Mammary epithelial cell (primary cell): ENCODE measurements at regions of chr17 and their contacts with region 1.

Region 1: GRCh38 chr17:7997186-7997585 is 5.2 kb upstream of the GUCY2D start:
- DNase-seq: peak; percentile 52
- H3K4me3 ChIP-seq: no peak overlapping the region
- H3K27ac ChIP-seq: no peak overlapping the region
- H3K4me1 ChIP-seq: peaks cover 13% of the 10 kb centered on the region
- H3K27me3 ChIP-seq: no peaks in the 10 kb centered on the region
- CTCF ChIP-seq: peak; percentile 39 to 67

Region 2: GRCh38 chr17:7825206-7825990 is 171.8 kb before region 1 on chr17:
- CTCF ChIA-PET with region 1: no interaction called
- dilution Hi-C with region 1: no loop called
- in situ Hi-C with region 1: no loop called
- intact Hi-C with region 1: no loop called
- DNase-seq: no peak
- H3K4me3 ChIP-seq: no peak overlapping the region
- H3K27ac ChIP-seq: no peak overlapping the region
- H3K4me1 ChIP-seq: peaks cover 1% of the 10 kb centered on the region
- H3K27me3 ChIP-seq: no peaks in the 10 kb centered on the region
- CTCF ChIP-seq: peak in 1 of 2 donors; percentile 19

Region 3: GRCh38 chr17:7972131-7972785 is 24.9 kb before region 1 on chr17:
- CTCF ChIA-PET with region 1: no interaction called
- dilution Hi-C with region 1: no loop called
- in situ Hi-C with region 1: no loop called
- intact Hi-C with region 1: no loop called
- DNase-seq: no peak
- H3K4me3 ChIP-seq: no peak overlapping the region
- H3K27ac ChIP-seq: no peak overlapping the region
- H3K4me1 ChIP-seq: no peaks in the 10 kb centered on the region
- H3K27me3 ChIP-seq: no peaks in the 10 kb centered on the region
- CTCF ChIP-seq: peak; percentile 7 to 46

Region 4: GRCh38 chr17:8103549-8103948 is 106.4 kb after region 1 on chr17:
- CTCF ChIA-PET with region 1: no interaction called
- dilution Hi-C with region 1: no loop called
- in situ Hi-C with region 1: no loop called
- intact Hi-C with region 1: no loop called
- DNase-seq: peak; percentile 77
- H3K4me3 ChIP-seq: no peak overlapping the region
- H3K27ac ChIP-seq: peak overlapping the region; percentile 28
- H3K4me1 ChIP-seq: peaks cover 38% of the 10 kb centered on the region
- H3K27me3 ChIP-seq: no peaks in the 10 kb centered on the region
- CTCF ChIP-seq: no peak

Region 5: GRCh38 chr17:8138672-8139371 is 141.6 kb after region 1 on chr17:
- CTCF ChIA-PET with region 1: interaction called, 10 read pairs
- dilution Hi-C with region 1: no loop called
- in situ Hi-C with region 1: no loop called
- intact Hi-C with region 1: no loop called
- DNase-seq: peak; percentile 96
- H3K4me3 ChIP-seq: peak overlapping the region; percentile 10 to 44 (median 29)
- H3K27ac ChIP-seq: peak overlapping the region; percentile 61
- H3K4me1 ChIP-seq: peaks cover 18% of the 10 kb centered on the region
- H3K27me3 ChIP-seq: no peaks in the 10 kb centered on the region
- CTCF ChIP-seq: peak; percentile 83 to 89